ENCODE measurements at regions of chr9 and their contacts with region 1.

Region 1: DNA sequence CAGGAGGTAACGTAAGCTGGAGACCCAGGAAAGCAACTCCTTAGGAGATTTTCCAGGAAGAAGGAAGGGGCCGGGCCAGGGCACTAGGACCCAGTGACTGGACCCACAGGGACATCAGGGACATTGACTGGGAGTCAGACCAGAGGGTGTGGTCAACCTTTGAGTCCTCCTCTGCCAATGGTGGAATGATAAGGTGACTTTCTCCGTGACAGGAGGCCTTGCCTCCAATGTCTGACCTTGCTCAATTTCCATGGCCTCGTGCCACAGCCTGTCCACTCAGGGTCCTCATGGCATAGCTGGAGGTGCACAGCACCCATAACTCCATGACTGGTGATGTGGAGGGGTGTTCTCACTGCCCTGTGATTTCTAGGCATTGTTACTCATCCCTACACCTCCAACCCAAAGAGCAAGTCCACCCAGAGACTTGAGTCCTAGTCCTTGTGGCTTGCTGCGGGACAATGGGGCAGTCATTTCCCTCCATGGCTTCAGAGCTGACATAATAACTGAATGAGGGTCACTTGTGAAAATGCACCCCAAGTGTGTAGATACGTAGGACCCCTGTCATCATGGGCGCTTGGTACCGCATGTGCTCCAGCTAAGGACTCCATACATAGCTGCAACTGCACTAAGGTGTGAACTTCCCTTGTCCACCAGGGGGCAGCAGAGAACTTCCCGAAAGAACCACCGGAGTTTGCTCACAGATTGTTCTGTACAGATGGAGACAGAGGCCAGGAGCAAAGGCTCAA is 4.1 kb upstream of the AMBP start:
- DNase-seq: peak; percentile 86
- H3K4me3 ChIP-seq: no peak overlapping the region; a peak in 1 of 4 replicates
- H3K27ac ChIP-seq: no peak overlapping the region
- H3K4me1 ChIP-seq: no peaks in the 10 kb centered on the region; a peak in 1 of 4 replicates
- H3K27me3 ChIP-seq: no peaks in the 10 kb centered on the region; the same call in 1 of the 2 replicates
- CTCF ChIP-seq: peak; percentile 89
- EP300 ChIP-seq: no peak
- RAD21 ChIP-seq: peak; percentile 92

Region 2: GRCh38 chr9:114098016-114098935 is 16.1 kb after region 1 on chr9:
- CTCF ChIA-PET with region 1: interaction called, 66 read pairs
- POLR2A ChIA-PET with region 1: interaction called, 3 read pairs
- DNase-seq: peak; percentile 93
- H3K4me3 ChIP-seq: peak overlapping the region; percentile 35 to 46; a peak in 3 of 4 replicates
- H3K27ac ChIP-seq: no peak overlapping the region
- H3K4me1 ChIP-seq: peaks cover 0 to 9% of the 10 kb centered on the region in 2 experiments; a peak in 1 of 4 replicates
- H3K27me3 ChIP-seq: peaks cover 8% of the 10 kb centered on the region; the same call in 1 of the 2 replicates
- CTCF ChIP-seq: no peak
- EP300 ChIP-seq: no peak
- RAD21 ChIP-seq: no peak

Region 3: DNA sequence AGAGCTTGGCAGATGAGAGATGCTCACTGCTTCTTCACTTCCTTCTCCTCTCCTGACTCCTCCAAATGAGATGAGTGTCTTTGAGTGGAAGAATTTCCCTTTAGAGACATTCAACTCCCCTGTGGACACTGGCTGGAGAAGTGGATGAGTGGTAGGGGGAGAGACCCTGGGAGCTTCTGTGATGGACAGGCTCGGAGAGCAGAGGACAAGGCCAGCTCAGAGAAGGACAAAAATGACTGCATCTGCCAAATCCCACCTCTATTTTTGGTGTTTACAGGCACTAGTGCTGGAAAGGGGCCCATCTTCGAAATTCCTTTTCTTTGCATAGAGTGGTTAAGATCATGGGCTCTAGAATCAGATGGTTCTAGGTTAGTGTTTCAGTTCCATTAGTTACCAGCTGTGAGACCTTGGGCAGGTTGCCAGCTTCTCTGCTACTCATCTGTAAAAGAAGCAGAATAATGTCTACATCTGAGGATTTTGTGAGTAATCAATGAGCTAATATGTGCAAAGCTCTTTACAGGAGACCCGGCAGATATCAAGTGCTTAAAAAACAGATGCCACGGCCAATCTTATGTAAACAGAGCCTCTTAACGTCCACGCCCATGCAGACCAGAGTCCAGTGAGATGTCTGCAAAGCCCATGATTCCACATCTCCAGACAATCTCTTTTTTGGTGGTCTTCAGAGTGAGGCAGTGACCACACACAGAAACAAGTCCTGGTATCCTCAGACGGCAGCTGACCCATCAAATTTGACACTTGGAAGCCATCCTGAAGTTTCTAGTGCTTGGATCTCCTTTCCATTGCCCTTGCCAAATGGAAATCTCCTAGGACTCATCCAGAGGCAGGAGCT is 59.6 kb after region 1 on chr9:
- CTCF ChIA-PET with region 1: interaction called, 18 read pairs
- POLR2A ChIA-PET with region 1: no interaction called
- DNase-seq: no peak
- H3K4me3 ChIP-seq: no peak overlapping the region
- H3K27ac ChIP-seq: no peak overlapping the region
- H3K4me1 ChIP-seq: no peaks in the 10 kb centered on the region
- H3K27me3 ChIP-seq: peaks cover 50% of the 10 kb centered on the region
- CTCF ChIP-seq: no peak
- EP300 ChIP-seq: no peak
- RAD21 ChIP-seq: no peak

Region 4: DNA sequence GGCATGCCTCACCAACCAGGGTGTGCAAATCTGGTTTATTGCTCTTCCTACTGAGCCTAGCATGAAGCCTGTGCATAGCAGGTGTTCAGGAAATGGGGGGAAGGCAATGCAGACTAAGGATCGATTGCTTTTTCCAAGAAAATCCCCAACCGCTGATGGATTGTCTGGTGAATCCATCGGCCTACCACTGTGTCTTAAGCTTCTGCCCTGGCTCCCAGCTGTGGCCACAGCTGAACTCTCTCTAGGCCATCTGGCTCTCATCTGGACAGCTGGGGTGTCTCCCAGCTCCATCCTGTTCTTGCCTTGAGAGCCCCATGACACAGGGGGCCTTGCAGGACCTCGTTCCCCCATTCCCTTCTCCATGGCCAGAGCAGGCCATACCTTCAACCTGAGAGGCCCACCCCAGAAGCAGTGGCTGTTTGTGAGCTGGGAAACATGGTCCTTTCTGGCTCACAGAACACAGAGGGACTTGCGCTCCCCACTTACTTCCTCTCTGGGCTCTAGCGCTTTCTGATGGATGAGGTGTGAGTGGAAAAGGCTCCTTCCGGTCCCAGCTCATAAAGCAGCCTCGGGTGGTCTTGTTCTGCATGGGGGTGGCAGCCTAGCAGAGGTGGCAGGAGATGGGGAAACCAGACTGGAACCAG is 114.9 kb after region 1 on chr9:
- CTCF ChIA-PET with region 1: no interaction called
- POLR2A ChIA-PET with region 1: no interaction called
- DNase-seq: no peak
- H3K4me3 ChIP-seq: no peak overlapping the region
- H3K27ac ChIP-seq: no peak overlapping the region
- H3K4me1 ChIP-seq: no peaks in the 10 kb centered on the region; a peak in 1 of 4 replicates
- H3K27me3 ChIP-seq: no peaks in the 10 kb centered on the region
- CTCF ChIP-seq: no peak
- EP300 ChIP-seq: no peak
- RAD21 ChIP-seq: no peak

Region 5: DNA sequence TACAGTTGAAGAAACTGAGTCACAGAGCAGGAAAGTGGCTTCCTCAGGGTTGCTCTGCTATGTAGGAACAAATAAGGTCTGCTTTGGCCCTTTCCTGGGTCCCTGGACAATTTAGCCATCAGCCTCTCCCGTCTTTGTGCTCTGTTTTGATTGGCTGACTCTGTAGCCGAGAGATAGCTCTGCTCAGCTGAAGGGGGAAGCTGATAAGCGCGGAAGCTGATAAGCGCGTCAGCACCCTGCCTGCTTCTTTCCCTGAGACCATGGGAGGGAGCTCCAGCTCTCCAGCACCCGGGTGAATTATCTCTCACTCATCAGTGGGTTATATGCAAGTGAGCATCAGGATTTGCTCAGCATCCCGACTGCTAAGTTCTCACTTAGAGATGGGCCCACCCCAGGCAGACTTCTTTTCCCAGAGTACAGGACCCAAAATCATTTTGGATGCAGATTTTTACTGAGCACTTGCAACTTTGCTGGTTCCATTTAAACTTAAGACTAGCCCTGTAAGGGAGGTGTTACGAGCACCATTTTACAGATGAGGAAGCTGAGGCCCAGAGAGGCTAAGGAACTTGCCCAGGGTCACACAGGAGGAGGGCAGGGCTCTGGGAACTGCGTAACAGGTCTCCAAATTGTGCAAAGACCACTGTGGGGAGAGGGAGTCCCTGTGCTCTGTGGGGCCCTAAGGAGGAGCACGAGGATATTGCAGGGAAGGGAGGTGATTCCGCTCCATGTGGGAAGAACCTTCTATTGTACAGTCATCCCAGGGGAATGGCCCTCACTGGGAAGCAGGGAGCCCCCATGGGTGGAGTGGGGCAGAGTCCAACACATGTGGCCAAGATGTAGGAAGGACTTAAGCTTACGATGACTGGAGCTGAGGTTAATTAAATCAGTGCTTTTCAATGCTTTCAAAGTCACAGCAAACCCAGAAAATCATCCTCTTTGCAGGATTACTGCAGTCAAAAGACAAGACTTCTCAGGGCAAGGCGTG is 157.0 kb after region 1 on chr9:
- CTCF ChIA-PET with region 1: interaction called, 15 read pairs
- POLR2A ChIA-PET with region 1: no interaction called
- DNase-seq: peak; percentile 94
- H3K4me3 ChIP-seq: no peak overlapping the region
- H3K27ac ChIP-seq: no peak overlapping the region; a peak in 1 of 4 replicates
- H3K4me1 ChIP-seq: peaks cover 0 to 42% of the 10 kb centered on the region in 2 experiments; a peak in 2 of 4 replicates
- H3K27me3 ChIP-seq: no peaks in the 10 kb centered on the region
- CTCF ChIP-seq: peak; percentile 46
- EP300 ChIP-seq: 0 out of 4 replicates have a peak, but pooled peaks of 1 of the 2 experiments have one; percentile 21
- RAD21 ChIP-seq: peak; percentile 87

Region 6: DNA sequence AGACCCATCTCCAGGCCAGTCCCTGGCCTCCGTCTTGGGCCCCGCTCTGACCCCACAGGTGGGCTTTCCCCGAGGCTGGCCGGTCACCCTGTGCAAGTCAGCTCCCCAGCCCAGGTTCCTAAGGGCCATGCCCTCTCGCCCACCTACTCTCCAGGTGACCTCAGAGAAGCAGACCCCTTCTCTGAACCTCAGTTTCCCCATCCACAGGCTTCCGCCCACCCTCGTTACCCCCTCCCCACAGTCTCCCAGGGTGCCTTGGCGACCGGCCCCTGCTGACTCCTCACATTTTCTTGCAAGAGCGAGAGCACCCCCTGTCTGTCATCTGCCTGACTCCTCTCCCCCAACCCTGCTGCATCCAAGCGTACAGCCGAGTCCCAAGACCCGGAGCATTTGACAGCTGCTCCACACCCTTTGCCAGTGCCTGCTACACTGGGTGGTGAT is 189.5 kb after region 1 on chr9:
- CTCF ChIA-PET with region 1: interaction called, 51 read pairs
- POLR2A ChIA-PET with region 1: no interaction called
- DNase-seq: peak; percentile 78
- H3K4me3 ChIP-seq: no peak overlapping the region
- H3K27ac ChIP-seq: no peak overlapping the region
- H3K4me1 ChIP-seq: peaks cover 0 to 2% of the 10 kb centered on the region in 2 experiments; a peak in 1 of 4 replicates
- H3K27me3 ChIP-seq: no peaks in the 10 kb centered on the region
- CTCF ChIP-seq: peak; percentile 55
- EP300 ChIP-seq: no peak
- RAD21 ChIP-seq: peak; percentile 80

Region 7: GRCh38 chr9:114299286-114300152 is 217.3 kb after region 1 on chr9:
- CTCF ChIA-PET with region 1: interaction called, 133 read pairs
- POLR2A ChIA-PET with region 1: no interaction called
- DNase-seq: no peak
- H3K4me3 ChIP-seq: no peak overlapping the region
- H3K27ac ChIP-seq: no peak overlapping the region
- H3K4me1 ChIP-seq: no peaks in the 10 kb centered on the region
- H3K27me3 ChIP-seq: no peaks in the 10 kb centered on the region
- CTCF ChIP-seq: no peak
- EP300 ChIP-seq: no peak
- RAD21 ChIP-seq: no peak

Region 8: DNA sequence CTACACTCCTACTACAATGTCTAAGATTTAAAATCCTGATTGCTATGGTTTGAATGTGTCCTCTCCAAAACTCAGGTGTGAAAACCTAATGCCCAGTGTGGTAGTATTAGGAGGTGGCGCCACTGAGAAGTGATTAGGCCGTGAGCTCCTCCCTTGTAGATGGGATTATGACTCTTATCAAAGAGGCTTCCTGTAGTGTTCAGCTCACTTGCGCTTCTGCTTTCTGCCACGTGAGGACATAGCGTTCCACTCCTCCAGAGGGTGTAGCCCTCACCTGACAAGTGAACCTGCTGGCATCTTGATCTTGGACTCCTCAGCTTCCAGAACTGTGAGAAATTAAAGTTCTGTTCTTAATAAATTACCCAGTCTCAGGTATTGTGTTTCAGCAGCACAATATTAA is 456.1 kb after region 1 on chr9:
- CTCF ChIA-PET with region 1: no interaction called
- POLR2A ChIA-PET with region 1: no interaction called
- DNase-seq: no peak
- H3K4me3 ChIP-seq: no peak overlapping the region
- H3K27ac ChIP-seq: no peak overlapping the region
- H3K4me1 ChIP-seq: no peaks in the 10 kb centered on the region
- H3K27me3 ChIP-seq: peaks cover 23% of the 10 kb centered on the region; the same call in 1 of the 2 replicates
- CTCF ChIP-seq: peak; percentile 17; the same call in 1 of the 2 replicates
- EP300 ChIP-seq: no peak
- RAD21 ChIP-seq: no peak

Measured in SK-N-SH (cell line).